HEK293 (cell line): ENCODE measurements at regions of chr2 and their contacts with region 1.

Region 1: DNA sequence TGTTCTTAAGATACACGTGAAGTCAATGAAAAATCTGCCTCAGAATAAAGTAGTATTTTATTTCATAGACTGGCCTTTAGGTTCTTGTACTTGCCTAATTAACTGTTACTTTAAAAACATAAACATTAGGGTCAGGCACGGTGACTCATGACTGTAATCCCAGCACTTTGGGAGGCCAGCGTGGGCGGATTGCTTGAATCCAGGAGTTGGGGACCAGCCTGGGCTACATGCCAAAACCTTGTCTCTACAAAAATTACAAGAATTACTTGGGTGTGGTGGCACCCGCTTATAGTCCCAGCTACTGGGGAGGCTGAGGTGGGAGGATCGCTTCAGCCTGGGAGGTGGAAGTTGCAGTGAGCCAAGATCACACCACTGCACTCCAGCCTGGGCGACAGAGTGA is 16.0 kb upstream of the SNORC start:
- H3K4me3 ChIP-seq: no peak overlapping the region
- H3K27ac ChIP-seq: no peak overlapping the region
- H3K4me1 ChIP-seq: peaks cover 5% of the 10 kb centered on the region
- CTCF ChIP-seq: no peak

Region 2: DNA sequence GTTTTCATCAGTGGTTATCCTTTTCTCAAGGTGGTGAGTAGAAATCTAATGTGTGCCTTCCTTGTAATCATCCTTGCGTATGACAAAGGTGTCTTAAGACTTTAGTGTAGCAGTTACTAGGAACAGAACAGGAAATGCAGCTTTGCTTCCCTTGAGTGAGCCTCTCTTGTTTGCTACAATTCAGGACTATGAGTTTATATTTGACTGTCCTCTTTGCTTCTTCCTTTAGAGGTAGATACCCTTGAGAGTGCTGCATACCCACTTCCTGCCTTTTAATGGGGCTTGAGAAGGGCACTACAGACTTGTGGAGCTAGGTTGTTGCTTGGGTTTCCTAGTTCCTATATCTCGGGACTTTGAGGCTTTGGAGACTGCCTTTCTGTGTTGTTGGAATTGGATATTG is 81.6 kb before region 1 on chr2:
- CTCF ChIA-PET with region 1: no interaction called
- POLR2A ChIA-PET with region 1: no interaction called
- H3K4me3 ChIP-seq: no peak overlapping the region
- H3K27ac ChIP-seq: no peak overlapping the region
- H3K4me1 ChIP-seq: peaks cover 6% of the 10 kb centered on the region; the same call in 1 of the 2 replicates
- CTCF ChIP-seq: no peak

Region 3: GRCh38 chr2:232783278-232783677 is 70.8 kb before region 1 on chr2:
- CTCF ChIA-PET with region 1: no interaction called
- POLR2A ChIA-PET with region 1: no interaction called
- H3K4me3 ChIP-seq: no peak overlapping the region
- H3K27ac ChIP-seq: no peak overlapping the region
- H3K4me1 ChIP-seq: peaks cover 24% of the 10 kb centered on the region
- CTCF ChIP-seq: no peak

Region 4: GRCh38 chr2:232843834-232844233 is 10.2 kb before region 1 on chr2:
- CTCF ChIA-PET with region 1: interaction called, 22 read pairs
- POLR2A ChIA-PET with region 1: no interaction called
- H3K4me3 ChIP-seq: no peak overlapping the region
- H3K27ac ChIP-seq: no peak overlapping the region
- H3K4me1 ChIP-seq: peaks cover under 1% of the 10 kb centered on the region; the same call in 1 of the 2 replicates
- CTCF ChIP-seq: no peak

Region 5: DNA sequence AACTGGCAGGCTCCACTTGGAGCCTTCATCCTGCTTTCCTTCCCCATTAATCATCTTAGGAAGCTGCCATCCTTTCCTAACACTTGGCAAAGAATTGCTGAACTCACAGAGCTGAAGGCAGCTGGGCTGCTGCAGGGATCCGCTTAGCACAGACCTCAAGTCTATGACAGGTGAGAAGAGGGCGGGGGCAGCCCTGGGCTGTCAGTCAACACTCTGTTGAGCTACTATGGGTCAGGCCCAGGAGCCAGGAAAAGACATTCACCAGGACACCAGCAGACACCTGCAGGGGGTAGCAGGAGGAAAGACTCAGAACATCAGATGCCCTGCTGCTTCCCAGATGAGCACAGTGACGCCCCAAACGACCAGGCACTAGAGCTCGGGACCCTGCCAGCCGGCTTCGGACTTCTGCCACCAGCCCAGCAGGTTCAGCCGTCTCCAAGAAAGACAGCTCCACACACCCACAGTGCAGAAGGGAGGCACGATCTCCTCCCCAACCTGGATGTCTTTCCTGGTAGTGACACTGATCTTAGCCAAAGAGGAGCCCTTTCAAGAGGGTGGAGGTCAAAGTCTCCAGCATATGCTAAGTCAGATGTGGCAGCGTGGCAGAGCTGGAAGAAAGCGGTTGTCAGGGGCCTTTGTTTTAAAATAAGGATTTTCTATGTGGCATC is 71.2 kb after region 1 on chr2:
- CTCF ChIA-PET with region 1: no interaction called
- POLR2A ChIA-PET with region 1: no interaction called
- H3K4me3 ChIP-seq: no peak overlapping the region
- H3K27ac ChIP-seq: no peak overlapping the region
- H3K4me1 ChIP-seq: no peaks in the 10 kb centered on the region
- CTCF ChIP-seq: no peak

Region 6: DNA sequence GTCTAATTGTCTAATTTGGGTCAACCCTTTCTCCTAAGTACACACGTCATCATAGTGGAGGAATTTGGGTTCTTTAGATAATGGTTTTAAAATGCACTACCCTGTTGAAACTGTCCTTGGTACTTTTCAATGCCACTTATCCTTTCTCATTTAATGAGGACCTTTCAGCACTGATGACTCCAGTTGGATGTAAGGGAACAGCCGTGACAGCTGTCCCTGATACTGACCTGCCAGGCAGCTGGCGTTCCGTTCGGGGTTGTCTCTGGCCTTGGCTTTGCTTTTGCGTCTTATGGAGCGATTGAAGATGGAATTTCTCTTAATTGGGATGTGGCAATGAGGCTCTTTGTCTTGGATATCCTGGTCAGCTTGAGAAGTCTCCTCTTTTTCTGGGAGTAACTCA is 120.3 kb after region 1 on chr2:
- CTCF ChIA-PET with region 1: no interaction called
- POLR2A ChIA-PET with region 1: no interaction called
- H3K4me3 ChIP-seq: no peak overlapping the region
- H3K27ac ChIP-seq: no peak overlapping the region
- H3K4me1 ChIP-seq: no peaks in the 10 kb centered on the region
- CTCF ChIP-seq: no peak

Region 7: DNA sequence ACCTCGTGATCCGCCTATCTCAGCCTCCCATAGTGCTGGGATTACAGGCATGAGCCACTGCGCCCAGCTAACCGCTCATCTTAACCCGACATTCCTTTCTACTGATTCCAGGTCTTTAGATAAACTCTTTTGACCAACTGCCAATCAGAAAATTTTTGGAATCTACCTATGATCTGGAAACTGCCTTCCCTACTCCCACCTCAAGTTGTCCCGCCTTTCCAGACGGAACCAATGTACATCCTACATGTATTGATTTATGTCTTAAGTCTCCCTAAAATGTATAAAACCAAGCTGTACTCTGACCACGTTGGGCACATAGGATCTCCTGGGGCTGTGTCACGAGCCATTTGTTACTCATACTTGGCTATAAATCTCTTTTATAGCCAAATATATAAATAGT is 175.2 kb after region 1 on chr2:
- CTCF ChIA-PET with region 1: interaction called, 16 read pairs
- POLR2A ChIA-PET with region 1: no interaction called
- H3K4me3 ChIP-seq: no peak overlapping the region
- H3K27ac ChIP-seq: no peak overlapping the region
- H3K4me1 ChIP-seq: no peaks in the 10 kb centered on the region
- CTCF ChIP-seq: no peak

Region 8: DNA sequence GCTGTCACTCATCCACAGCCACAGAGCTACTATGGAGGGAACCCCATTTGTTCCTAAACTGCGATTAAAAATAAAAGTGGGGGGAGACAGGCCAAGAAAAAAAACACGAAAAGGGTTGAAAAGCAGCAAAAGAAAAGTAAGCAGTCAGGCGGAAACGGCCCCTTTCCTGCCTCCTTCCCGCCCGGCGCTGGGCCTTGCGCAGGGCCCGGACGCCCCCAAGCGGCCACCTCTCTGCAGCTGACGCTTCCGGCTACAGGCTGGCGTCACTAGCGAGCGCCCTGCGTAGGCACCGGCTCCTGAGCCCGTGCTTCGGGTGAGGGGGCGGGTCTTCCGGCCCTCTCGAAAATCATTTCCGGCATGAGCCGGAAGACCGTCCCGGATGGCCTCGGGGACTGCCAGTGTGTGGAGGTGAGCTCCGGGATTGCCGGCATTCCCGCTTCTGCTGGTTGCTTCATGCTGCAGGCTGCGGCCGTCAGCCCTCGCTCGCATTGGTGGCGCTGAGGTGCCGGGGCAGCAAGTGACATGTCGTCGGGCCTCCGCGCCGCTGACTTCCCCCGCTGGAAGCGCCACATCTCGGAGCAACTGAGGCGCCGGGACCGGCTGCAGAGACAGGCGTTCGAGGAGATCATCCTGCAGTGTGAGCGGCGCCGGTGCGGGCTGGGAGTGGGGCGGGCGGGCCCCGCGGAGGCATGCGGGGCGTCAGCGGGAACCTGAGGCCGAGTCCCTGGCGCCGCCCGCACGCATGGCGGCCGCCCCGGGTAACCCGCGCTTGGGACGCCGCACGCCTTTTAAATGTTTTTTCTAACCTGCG is 397.4 kb after region 1 on chr2 and contains the start of gene ATG16L1:
- CTCF ChIA-PET with region 1: interaction called, 13 read pairs
- POLR2A ChIA-PET with region 1: no interaction called
- H3K4me3 ChIP-seq: peak within 1 kb of the TSS; percentile 98
- H3K27ac ChIP-seq: peak within 1 kb of the TSS; percentile 45
- H3K4me1 ChIP-seq: no peaks in the 10 kb centered on the region
- CTCF ChIP-seq: peak; percentile 99